KBM-7 (cell line): ENCODE measurements at regions of chr10 and their contacts with region 1.

Region 1: GRCh38 chr10:22597138-22597537 is 117.2 kb downstream of the PIP4K2A start:
- DNase-seq: no peak

Region 2: GRCh38 chr10:21989453-21990154 is 607.5 kb before region 1 on chr10:
- in situ Hi-C with region 1: loop called (anchors 25 kb)
- DNase-seq: peak; percentile 56

Region 3: DNA sequence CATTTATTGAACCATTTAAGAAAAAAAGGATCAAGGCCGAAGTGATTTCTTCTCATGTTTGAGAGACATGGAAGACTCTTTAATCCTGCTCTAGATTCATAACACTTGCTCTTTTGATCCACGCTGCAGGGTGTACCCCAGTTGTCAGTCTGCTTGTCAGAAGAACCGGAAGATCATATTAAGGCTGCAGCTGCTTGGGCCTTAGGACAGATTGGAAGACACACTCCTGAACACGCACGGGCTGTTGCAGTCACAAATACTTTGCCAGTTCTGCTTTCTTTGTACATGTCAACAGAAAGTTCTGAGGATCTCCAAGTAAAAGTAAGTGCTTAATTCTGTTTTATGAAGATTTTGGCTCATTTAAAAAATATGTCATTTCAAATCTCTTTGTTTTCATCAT is 205.5 kb before region 1 on chr10:
- in situ Hi-C with region 1: no loop called
- DNase-seq: no peak